OCI-LY7 (cell line): ENCODE measurements at regions of chr17 and their contacts with region 1.

Region 1: GRCh38 chr17:10119203-10120108 is 79.0 kb downstream of the GAS7 start:
- DNase-seq: no peak
- H3K4me3 ChIP-seq: no peak overlapping the region
- H3K27ac ChIP-seq: no peak overlapping the region
- H3K4me1 ChIP-seq: no peaks in the 10 kb centered on the region
- CTCF ChIP-seq: no peak

Region 2: GRCh38 chr17:10156948-10157607 is 37.6 kb after region 1 on chr17:
- CTCF ChIA-PET with region 1: no interaction called
- POLR2A ChIA-PET with region 1: no interaction called
- intact Hi-C with region 1: loop called (anchors 1 kb)
- DNase-seq: no peak
- H3K4me3 ChIP-seq: no peak overlapping the region
- H3K27ac ChIP-seq: no peak overlapping the region
- H3K4me1 ChIP-seq: no peaks in the 10 kb centered on the region
- CTCF ChIP-seq: no peak

Region 3: DNA sequence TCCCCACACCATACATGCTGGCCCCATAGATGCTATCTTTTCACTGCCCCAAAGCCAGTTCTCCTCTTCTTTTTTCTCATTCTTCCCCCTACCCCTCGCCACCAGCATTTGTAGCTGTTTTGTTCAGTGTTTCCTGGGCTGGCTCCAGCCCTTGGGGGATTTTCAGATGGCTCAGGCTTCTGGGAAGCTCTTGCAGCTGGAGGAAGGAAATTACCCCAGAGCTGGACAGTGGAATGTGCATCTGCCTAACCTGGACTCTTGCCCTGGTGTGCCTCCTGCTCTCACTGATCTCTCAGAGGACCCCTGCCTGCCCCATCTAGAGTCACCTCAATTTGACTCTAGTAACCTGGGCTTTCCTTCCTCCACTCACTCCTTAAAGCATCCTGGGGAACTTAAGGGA is 170.6 kb after region 1 on chr17:
- CTCF ChIA-PET with region 1: no interaction called
- POLR2A ChIA-PET with region 1: no interaction called
- intact Hi-C with region 1: no loop called
- DNase-seq: no peak
- H3K4me3 ChIP-seq: no peak overlapping the region
- H3K27ac ChIP-seq: no peak overlapping the region
- H3K4me1 ChIP-seq: no peaks in the 10 kb centered on the region
- CTCF ChIP-seq: no peak